ENCODE measurements at regions of chr12 and their contacts with region 1.

Region 1: DNA sequence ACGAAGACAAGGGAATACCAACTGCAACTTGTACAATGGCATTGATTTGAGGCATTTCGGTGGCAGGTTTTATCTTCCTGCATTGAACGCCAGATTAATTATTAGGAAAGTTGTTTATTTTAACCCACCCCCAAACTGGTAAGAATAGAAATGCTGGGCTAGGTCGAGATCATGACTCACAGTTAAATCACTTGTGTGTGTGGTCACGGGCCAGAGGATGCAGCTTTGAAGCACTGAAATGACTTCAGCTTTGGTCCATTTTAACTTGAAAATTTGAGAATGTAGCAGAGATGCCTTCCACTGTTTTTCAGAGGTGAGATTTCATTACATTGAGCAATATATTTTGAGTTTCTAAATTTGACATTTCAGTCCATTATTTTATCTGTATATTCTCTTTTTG is 23.6 kb upstream of the KCNH3 start:
- DNase-seq: no peak
- H3K4me3 ChIP-seq: no peak overlapping the region
- H3K27ac ChIP-seq: no peak overlapping the region
- H3K4me1 ChIP-seq: peaks cover 0 to 4% (median 0%) of the 10 kb centered on the region in 4 donors
- H3K27me3 ChIP-seq: no peaks in the 10 kb centered on the region
- CTCF ChIP-seq: no peak
- EP300 ChIP-seq: no peak
- POLR2A ChIP-seq: no peak

Region 2: GRCh38 chr12:49288412-49288853 is 226.8 kb before region 1 on chr12:
- intact Hi-C with region 1: loop called (anchors 5 kb)
- DNase-seq: peak; percentile 68
- H3K4me3 ChIP-seq: no peak overlapping the region
- H3K27ac ChIP-seq: no peak overlapping the region
- H3K4me1 ChIP-seq: peaks cover 0 to 7% (median 3%) of the 10 kb centered on the region in 4 donors
- H3K27me3 ChIP-seq: peaks cover 0 to 33% (median 0%) of the 10 kb centered on the region in 3 donors
- CTCF ChIP-seq: peak; percentile 64 to 81 (median 71)
- EP300 ChIP-seq: no peak
- POLR2A ChIP-seq: no peak

Region 3: GRCh38 chr12:49358483-49359141 is 156.7 kb before region 1 on chr12:
- intact Hi-C with region 1: loop called (anchors 2 kb)
- DNase-seq: no peak
- H3K4me3 ChIP-seq: no peak overlapping the region
- H3K27ac ChIP-seq: no peak overlapping the region
- H3K4me1 ChIP-seq: peaks cover 0 to 12% (median 7%) of the 10 kb centered on the region in 4 donors
- H3K27me3 ChIP-seq: peaks cover 0 to 11% (median 5%) of the 10 kb centered on the region in 3 donors
- CTCF ChIP-seq: peak; percentile 48 to 74 (median 70)
- EP300 ChIP-seq: no peak
- POLR2A ChIP-seq: no peak

Measured in sigmoid colon (tissue), 7 donors.